Activated T-helper 1 cell treated with anti-CD3 and anti-CD28 coated beads, Interleukin-12 subunit alpha, Interleukin-12 subunit beta, Interleukin-2, Interleukin-4 antibody, amounts not matched to agents 30 ng/mL and 10 ng/mL and 1 ng/mL, durations not matched to agents 14 hours and 24 hours and 36 hours (primary cell): ENCODE measurements at regions of chr17 and their contacts with region 1.

Region 1: GRCh38 chr17:40317880-40318829 is 9.2 kb downstream of the RARA start:
- DNase-seq: peak; percentile 87
- H3K4me3 Mint-ChIP-seq: peak overlapping the region; percentile 95
- H3K27ac Mint-ChIP-seq: peak overlapping the region; percentile 92
- H3K4me1 Mint-ChIP-seq: peaks cover 91% of the 10 kb centered on the region
- H3K27me3 Mint-ChIP-seq: peaks cover 3% of the 10 kb centered on the region

Region 2: GRCh38 chr17:39769974-39770587 is 548.1 kb before region 1 on chr17:
- intact Hi-C with region 1: loop called (anchors 5 kb)
- DNase-seq: peak; percentile 63
- H3K4me3 Mint-ChIP-seq: peak overlapping the region; percentile 38
- H3K27ac Mint-ChIP-seq: peak overlapping the region; percentile 56
- H3K4me1 Mint-ChIP-seq: peaks cover 93% of the 10 kb centered on the region
- H3K27me3 Mint-ChIP-seq: no peaks in the 10 kb centered on the region

Region 3: DNA sequence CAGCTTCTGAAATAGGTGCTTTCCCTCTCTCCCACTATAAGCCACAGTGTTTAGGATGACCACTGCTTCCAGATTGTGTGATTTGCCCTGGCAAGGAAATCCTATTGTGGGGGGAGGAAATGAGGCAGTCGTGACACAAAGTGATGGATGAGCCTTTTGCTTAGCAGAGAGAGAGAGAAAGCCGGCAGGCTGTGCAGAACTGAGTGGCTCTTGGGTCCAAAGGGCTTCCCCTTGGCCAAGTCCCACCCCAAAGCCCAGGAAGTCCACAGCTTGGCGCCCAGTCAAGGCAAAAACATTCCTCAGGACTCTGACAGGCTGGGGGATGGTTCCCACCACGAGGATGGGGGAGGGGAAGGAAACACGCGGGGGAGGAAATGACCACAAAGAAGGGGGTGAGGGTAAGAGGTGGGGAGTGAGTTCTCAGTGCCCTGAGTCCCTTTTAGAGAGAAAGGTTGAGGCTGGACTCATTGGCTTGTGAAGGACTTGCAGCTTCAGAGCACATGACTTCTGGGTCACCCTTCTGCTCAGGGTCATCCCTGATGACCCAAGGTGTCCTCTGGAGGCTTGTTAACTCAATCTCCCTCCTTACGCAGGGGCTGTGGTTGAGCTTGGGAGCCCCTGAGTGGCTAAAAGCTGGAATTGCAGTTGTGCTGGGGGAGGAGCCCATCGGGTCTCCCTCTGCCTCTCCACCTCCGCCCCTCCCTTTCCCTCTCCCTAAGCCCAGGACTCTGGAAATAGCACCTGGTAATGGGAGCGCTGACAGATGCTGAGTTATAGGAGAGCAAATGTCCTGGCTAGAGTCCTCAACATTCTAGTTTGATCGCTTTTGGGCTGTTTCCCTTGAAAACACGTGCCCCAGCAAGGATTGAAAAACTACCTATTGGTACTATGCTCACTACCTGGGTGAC is 206.7 kb before region 1 on chr17:
- intact Hi-C with region 1: no loop called
- DNase-seq: peak; percentile 57
- H3K4me3 Mint-ChIP-seq: peak overlapping the region; percentile 35
- H3K27ac Mint-ChIP-seq: peak overlapping the region; percentile 72
- H3K4me1 Mint-ChIP-seq: peaks cover 53% of the 10 kb centered on the region
- H3K27me3 Mint-ChIP-seq: peaks cover 7% of the 10 kb centered on the region

Region 4: GRCh38 chr17:40122999-40123810 is 194.9 kb before region 1 on chr17:
- intact Hi-C with region 1: loop called (anchors 1 kb)
- DNase-seq: peak; percentile 55
- H3K4me3 Mint-ChIP-seq: peak overlapping the region; percentile 97
- H3K27ac Mint-ChIP-seq: peak overlapping the region; percentile 94
- H3K4me1 Mint-ChIP-seq: peaks cover 40% of the 10 kb centered on the region
- H3K27me3 Mint-ChIP-seq: no peaks in the 10 kb centered on the region

Region 5: GRCh38 chr17:40303009-40303657 is 15.0 kb before region 1 on chr17:
- intact Hi-C with region 1: loop called (anchors 1 kb)
- DNase-seq: peak; percentile 25
- H3K4me3 Mint-ChIP-seq: no peak overlapping the region
- H3K27ac Mint-ChIP-seq: no peak overlapping the region
- H3K4me1 Mint-ChIP-seq: peaks cover 22% of the 10 kb centered on the region
- H3K27me3 Mint-ChIP-seq: no peaks in the 10 kb centered on the region

Region 6: DNA sequence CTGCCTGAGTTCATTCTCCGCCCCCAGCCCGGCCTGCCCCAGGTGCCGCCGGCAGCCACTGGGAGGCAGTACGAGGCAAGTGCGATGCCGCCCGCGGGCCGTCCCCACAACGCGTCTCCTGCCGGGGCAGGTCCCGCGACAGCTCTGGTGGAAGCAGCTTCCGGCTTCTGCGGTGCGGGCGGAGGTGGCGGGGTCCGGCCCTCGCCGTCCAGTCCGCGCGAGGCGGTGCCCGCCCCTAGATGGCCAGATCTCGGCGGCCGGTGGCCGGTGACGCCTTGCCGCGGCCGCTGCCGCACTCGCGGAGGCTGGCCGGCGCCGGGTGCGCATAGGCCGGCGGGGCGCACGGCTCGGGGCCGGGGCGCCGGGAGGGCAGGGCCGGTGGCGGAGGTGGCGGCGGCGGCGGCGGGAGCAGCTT is 44.5 kb after region 1 on chr17:
- intact Hi-C with region 1: loop called (anchors 5 kb)
- DNase-seq: peak; percentile 85
- H3K4me3 Mint-ChIP-seq: peak overlapping the region; percentile 77
- H3K27ac Mint-ChIP-seq: peak overlapping the region; percentile 84
- H3K4me1 Mint-ChIP-seq: peaks cover 14% of the 10 kb centered on the region
- H3K27me3 Mint-ChIP-seq: peaks cover 1% of the 10 kb centered on the region

Region 7: DNA sequence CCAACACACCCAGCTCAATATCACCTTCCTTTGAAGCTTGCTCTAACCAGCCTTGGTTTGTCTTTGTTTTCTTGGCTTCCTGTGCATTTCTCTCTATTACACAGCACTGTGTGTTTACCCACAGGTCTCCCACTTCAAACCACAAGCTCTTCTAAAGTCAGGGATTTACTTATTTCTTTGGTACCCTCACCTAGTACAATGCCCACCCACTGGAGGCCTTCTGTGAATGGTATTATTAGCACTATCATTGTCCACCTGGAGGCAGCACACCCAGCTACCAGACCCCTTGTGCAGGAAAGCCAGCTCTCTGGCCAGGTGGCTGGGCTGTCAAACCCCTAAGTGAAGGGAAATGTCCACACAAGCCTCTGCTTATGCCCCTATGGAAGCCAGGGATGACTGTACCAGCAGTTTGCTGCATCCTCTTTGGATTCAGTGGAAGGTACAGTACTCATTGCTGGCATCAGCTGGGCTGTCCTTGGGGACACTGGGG is 108.9 kb after region 1 on chr17:
- intact Hi-C with region 1: loop called (anchors 5 kb)
- DNase-seq: no peak
- H3K4me3 Mint-ChIP-seq: peak overlapping the region; percentile 12
- H3K27ac Mint-ChIP-seq: peak overlapping the region; percentile 14
- H3K4me1 Mint-ChIP-seq: peaks cover 35% of the 10 kb centered on the region
- H3K27me3 Mint-ChIP-seq: peaks cover 37% of the 10 kb centered on the region

Region 8: GRCh38 chr17:40531051-40531991 is 213.2 kb after region 1 on chr17:
- intact Hi-C with region 1: loop called (anchors 1 kb)
- DNase-seq: peak; percentile 48
- H3K4me3 Mint-ChIP-seq: peak overlapping the region; percentile 82
- H3K27ac Mint-ChIP-seq: peak overlapping the region; percentile 93
- H3K4me1 Mint-ChIP-seq: peaks cover 82% of the 10 kb centered on the region
- H3K27me3 Mint-ChIP-seq: no peaks in the 10 kb centered on the region

Region 9: DNA sequence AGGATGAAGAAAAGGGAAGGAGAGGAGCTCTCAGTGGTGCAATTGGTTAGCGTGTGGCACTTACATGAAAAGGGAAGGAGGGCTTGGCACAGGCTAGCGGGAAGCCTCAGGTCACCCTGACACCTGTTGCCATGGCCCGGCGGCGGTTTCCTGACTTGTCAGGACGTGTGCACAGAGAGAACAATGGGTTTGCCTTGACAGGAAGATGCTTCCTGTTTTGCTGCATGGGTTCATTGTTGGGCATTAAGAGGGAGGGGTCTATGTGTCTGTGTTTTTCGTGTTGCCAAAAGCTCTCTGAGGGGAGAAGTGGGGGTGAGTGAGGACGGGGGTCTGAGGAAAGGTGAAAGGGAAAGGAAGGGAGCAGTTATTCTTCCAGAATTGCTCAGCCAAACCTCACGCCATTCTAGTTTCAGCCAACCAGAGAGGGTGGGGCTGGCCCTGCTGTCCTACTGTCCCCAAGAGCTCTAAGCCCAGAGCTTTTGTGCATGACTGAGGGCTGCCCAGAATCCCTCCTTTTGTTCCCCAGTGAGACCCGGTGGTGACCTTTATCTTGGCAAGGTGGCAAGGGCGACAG is 264.3 kb after region 1 on chr17:
- intact Hi-C with region 1: no loop called
- DNase-seq: peak; percentile 58
- H3K4me3 Mint-ChIP-seq: peak overlapping the region; percentile 8
- H3K27ac Mint-ChIP-seq: peak overlapping the region; percentile 79
- H3K4me1 Mint-ChIP-seq: peaks cover 81% of the 10 kb centered on the region
- H3K27me3 Mint-ChIP-seq: no peaks in the 10 kb centered on the region